Naive thymus-derived CD8-positive, alpha-beta T cell (primary cell): ENCODE measurements at regions of chr21 and their contacts with region 1.

Region 1: DNA sequence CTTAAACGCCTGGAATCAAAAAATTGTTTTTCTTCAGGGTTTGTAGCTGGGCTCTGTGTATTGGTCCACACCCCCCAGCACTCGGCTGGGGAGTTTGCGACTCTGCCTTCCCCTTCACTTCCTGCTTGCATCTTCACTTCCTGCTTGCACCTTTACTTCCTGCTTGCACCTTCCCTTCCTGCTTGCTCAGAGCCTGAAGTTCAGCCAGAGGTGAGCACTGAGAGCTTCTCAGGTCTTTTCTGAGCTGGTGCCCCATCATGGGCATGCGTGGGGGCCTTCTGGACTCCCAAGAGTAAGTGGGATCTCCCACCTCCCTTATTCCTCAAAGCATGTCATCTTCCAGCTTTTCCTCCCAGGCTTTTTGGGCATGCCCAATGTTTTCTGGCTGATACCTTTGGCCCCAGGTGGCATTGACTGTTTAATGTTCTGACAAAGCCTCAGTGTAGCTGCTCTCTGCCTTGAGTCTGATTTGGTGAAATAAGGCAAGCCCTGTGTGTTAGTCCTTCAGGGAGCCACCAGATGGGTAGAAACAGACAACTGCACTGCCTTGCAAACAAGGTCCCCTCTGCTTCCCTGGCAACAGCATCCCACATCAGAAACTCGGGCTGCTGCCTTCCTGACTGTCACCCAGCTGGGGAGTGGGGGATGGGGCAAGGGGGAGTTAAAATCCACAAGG is 3.5 kb downstream of the KRTAP10-2 start:
- DNase-seq: peak in 9 of 10 donors; percentile 23 to 73 (median 48)
- ATAC-seq: peak; percentile 93 to 98
- H3K4me3 Mint-ChIP-seq: peak overlapping the region; percentile 75 to 90 (median 82)
- H3K27ac Mint-ChIP-seq: peak overlapping the region; percentile 88 to 98 (median 96)
- H3K4me1 Mint-ChIP-seq: peaks cover 25 to 36% (median 31%) of the 10 kb centered on the region in 4 donors
- H3K27me3 Mint-ChIP-seq: no peaks in the 10 kb centered on the region

Region 2: GRCh38 chr21:44618504-44618903 is 70.7 kb after region 1 on chr21:
- POLR2A ChIA-PET with region 1: interaction called, 14 read pairs
- DNase-seq: no peak
- ATAC-seq: peak; percentile 52 to 53
- H3K4me3 Mint-ChIP-seq: peak overlapping the region; percentile 56 to 87 (median 72)
- H3K27ac Mint-ChIP-seq: peak overlapping the region; percentile 93 to 98 (median 94)
- H3K4me1 Mint-ChIP-seq: peaks cover 34 to 59% (median 55%) of the 10 kb centered on the region in 4 donors
- H3K27me3 Mint-ChIP-seq: no peaks in the 10 kb centered on the region